ENCODE measurements at regions of chr14 and their contacts with region 1.

Region 1: DNA sequence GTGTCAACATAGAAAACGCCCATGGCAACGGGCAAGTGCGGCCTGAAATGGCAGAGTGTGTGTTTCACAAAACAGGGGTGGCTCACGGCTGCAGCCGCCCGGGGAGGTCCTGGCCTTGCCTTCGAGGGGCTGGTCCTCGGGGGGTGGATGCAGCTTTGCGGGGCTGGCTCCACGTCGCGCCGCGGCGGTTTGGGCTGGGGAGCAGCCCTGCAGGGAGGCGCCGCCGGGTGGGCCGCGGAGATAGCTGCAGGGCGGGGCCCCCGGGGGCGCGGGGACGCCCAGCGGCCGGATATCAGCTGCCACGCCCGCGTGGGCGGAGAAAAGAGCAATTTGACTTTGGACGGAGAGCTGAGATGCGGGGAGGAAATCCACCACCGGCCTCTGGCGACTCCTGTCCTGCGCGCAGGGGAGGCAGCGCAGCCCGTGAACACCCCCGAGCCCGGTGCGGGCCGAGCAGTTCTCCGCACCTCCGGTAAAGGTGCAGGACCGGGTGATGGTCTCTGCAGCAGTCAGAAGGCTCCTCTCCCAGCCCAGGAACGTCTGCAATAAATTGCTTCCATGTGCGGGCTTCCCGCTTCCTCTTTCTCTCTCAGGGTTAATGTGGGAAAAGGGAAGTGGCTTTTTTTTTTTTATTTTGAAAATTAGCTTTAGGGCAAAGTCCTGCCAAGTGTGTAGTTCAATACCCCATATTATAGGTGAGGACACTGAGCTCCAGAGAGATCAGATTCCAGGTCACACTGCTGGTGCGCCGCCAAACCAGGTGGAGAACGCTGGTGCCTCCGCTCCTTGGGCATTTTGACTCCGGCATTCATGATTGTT is 110.5 kb downstream of the ARF6 start:
- DNase-seq: peak; percentile 73 to 92 (median 79)
- H3K4me3 ChIP-seq: peak overlapping the region; percentile 82
- H3K4me3 Mint-ChIP-seq: peak overlapping the region; percentile 79 to 92 (median 81)
- H3K27ac ChIP-seq: peak overlapping the region; percentile 100
- H3K27ac Mint-ChIP-seq: peak overlapping the region; percentile 95 to 100 (median 99)
- H3K4me1 ChIP-seq: peaks cover 52% of the 10 kb centered on the region
- H3K4me1 Mint-ChIP-seq: peaks cover 51 to 74% (median 63%) of the 10 kb centered on the region in 3 donors
- H3K27me3 ChIP-seq: no peaks in the 10 kb centered on the region
- H3K27me3 Mint-ChIP-seq: peaks cover 0 to 1% of the 10 kb centered on the region in 2 donors

Region 2: DNA sequence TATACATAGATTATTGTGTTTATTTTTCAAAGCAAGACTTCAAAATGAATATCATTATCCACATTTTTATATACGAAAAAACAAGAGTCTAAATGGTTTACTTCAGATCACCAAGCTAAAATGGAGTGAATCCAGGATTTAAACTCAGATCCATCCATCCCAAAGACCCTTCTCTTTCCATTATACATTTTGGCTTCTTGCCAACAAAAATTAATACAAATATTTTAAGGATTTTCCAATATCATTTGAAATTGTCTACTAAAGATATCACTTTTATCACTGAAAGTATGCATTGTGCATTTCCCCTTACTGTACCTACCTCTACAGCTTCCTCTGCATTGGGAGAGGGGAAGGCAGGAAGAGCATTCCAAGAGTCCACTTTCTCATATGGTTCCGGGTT is 958.4 kb before region 1 on chr14:
- CTCF ChIA-PET with region 1: no interaction called
- POLR2A ChIA-PET with region 1: no interaction called
- DNase-seq: no peak
- H3K4me3 ChIP-seq: no peak overlapping the region
- H3K4me3 Mint-ChIP-seq: no peak overlapping the region
- H3K27ac ChIP-seq: no peak overlapping the region
- H3K27ac Mint-ChIP-seq: no peak overlapping the region
- H3K4me1 ChIP-seq: no peaks in the 10 kb centered on the region
- H3K4me1 Mint-ChIP-seq: no peaks in the 10 kb centered on the region
- H3K27me3 ChIP-seq: no peaks in the 10 kb centered on the region
- H3K27me3 Mint-ChIP-seq: no peaks in the 10 kb centered on the region

Region 3: DNA sequence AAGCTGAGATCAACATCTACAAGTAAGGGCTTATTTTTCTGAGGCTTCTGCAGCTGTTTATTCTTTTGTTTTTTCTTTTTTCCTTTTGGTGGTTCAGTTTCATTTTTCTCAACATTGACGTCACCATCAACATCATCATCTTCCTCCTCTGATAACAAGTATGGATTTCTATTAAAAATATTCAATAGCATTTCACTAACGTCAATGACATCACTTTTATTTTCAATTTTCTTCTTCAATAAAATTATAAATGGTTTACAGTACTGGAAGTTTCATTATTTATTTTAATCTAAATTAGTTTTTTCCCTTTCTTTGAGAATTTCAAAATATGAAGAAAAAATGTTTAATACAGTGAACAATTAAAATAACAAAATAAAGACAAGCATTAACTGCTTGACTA is 174.8 kb before region 1 on chr14:
- CTCF ChIA-PET with region 1: no interaction called
- POLR2A ChIA-PET with region 1: no interaction called
- DNase-seq: no peak
- H3K4me3 ChIP-seq: no peak overlapping the region
- H3K4me3 Mint-ChIP-seq: no peak overlapping the region
- H3K27ac ChIP-seq: no peak overlapping the region
- H3K27ac Mint-ChIP-seq: no peak overlapping the region
- H3K4me1 ChIP-seq: no peaks in the 10 kb centered on the region
- H3K4me1 Mint-ChIP-seq: peaks cover 6 to 8% (median 7%) of the 10 kb centered on the region in 3 donors
- H3K27me3 ChIP-seq: no peaks in the 10 kb centered on the region
- H3K27me3 Mint-ChIP-seq: no peaks in the 10 kb centered on the region

Region 4: DNA sequence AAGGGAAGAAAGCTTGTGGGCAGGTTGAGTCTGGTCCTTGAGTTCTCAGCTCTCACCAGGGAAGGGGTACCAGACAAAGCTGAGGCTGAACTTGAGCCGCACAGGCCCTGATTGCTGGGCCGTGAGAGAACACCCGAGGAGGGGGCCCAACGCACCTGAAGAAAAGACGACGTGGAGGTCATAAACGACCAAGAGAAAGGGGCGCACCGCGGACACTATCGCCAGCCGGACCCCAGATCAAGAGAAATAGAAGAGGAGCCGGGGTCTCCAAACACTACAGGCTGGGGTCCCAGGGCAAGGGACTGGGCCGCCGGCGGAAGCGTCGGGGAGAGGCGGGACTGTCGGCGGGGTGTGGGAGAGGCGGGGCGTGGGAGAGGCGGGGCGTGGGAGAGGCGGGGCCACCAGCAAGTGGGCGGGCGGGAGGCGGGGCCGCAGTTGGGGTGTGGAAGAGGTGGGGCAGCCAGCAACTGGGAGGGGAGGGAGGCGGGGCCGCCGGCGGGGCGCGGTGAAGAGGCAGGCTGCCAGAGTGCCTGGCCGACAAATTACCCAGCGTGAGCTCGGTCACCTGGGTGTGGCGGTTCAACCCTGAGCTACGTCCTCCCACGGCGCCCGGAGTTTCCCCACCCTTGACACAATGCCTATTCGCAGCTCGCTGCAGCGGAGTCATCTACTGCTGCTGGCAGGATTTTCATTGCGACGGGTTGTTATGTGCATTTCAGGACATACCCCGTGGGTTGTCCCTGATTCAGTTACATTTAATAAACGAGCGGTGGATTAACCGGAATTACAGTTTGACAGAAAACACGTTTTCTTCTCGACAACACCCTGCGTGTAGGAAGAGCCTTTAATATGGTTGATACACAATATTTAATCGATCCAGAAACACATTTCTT is 135.3 kb before region 1 on chr14:
- CTCF ChIA-PET with region 1: interaction called, 163 read pairs
- POLR2A ChIA-PET with region 1: interaction called, 71 read pairs
- DNase-seq: peak; percentile 93 to 99 (median 97)
- H3K4me3 ChIP-seq: peak overlapping the region; percentile 76
- H3K4me3 Mint-ChIP-seq: peak overlapping the region; percentile 77 to 93 (median 89)
- H3K27ac ChIP-seq: peak overlapping the region; percentile 75
- H3K27ac Mint-ChIP-seq: peak overlapping the region; percentile 92 to 99 (median 98)
- H3K4me1 ChIP-seq: peaks cover 40% of the 10 kb centered on the region
- H3K4me1 Mint-ChIP-seq: peaks cover 17 to 30% (median 17%) of the 10 kb centered on the region in 3 donors
- H3K27me3 ChIP-seq: no peaks in the 10 kb centered on the region
- H3K27me3 Mint-ChIP-seq: no peaks in the 10 kb centered on the region

Region 5: GRCh38 chr14:49940808-49941421 is 62.5 kb before region 1 on chr14:
- CTCF ChIA-PET with region 1: interaction called, 9 read pairs
- POLR2A ChIA-PET with region 1: interaction called, 13 read pairs
- DNase-seq: peak in 3 of 5 donors; percentile 31 to 61 (median 35)
- H3K4me3 ChIP-seq: no peak overlapping the region
- H3K4me3 Mint-ChIP-seq: peak overlapping the region in 6 of 7 donors; percentile 54 to 77 (median 64)
- H3K27ac ChIP-seq: no peak overlapping the region
- H3K27ac Mint-ChIP-seq: peak overlapping the region; percentile 5 to 95 (median 78)
- H3K4me1 ChIP-seq: peaks cover 44% of the 10 kb centered on the region
- H3K4me1 Mint-ChIP-seq: peaks cover 55 to 76% (median 65%) of the 10 kb centered on the region in 3 donors
- H3K27me3 ChIP-seq: no peaks in the 10 kb centered on the region
- H3K27me3 Mint-ChIP-seq: no peaks in the 10 kb centered on the region

Region 6: GRCh38 chr14:49954171-49954631 is 49.2 kb before region 1 on chr14:
- CTCF ChIA-PET with region 1: no interaction called
- POLR2A ChIA-PET with region 1: no interaction called
- DNase-seq: no peak
- H3K4me3 ChIP-seq: no peak overlapping the region
- H3K4me3 Mint-ChIP-seq: no peak overlapping the region
- H3K27ac ChIP-seq: no peak overlapping the region
- H3K27ac Mint-ChIP-seq: no peak overlapping the region
- H3K4me1 ChIP-seq: peaks cover 4% of the 10 kb centered on the region
- H3K4me1 Mint-ChIP-seq: peaks cover 11 to 26% (median 23%) of the 10 kb centered on the region in 3 donors
- H3K27me3 ChIP-seq: no peaks in the 10 kb centered on the region
- H3K27me3 Mint-ChIP-seq: no peaks in the 10 kb centered on the region

Region 7: DNA sequence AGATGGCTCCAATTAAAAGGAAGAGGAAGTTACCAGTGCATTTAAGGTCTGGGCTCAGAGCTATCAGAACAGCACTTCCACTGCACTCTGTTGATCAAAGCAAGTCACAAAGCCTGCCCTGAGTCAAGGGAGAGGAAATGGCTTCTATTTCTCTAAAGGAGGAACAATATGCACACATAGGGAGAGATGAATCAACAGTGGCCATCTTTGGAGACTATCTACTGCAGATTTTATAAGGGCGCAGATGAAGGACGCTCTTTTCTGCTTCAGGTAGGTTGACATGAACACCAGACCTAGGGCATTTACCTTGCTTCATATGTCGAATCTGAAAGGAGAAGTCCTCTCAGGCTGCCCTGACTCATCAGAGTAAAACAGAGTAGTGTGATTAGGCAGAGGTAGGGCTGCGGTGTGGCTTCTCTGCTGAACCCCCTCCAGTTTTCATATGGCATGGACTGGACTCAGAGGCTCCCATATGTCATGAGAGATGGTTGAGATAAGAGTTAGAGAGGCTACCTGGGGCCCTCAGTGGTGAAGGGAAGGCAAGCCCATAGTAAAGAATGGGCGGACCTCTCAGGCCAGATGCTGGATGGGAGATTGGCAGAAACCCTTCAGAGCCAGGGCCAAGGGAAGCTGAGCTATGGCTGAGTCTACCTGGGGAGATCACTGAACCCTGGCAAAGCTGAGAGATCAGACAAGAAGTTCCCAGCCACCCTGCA is 26.1 kb before region 1 on chr14:
- CTCF ChIA-PET with region 1: interaction called, 40 read pairs
- POLR2A ChIA-PET with region 1: interaction called, 50 read pairs
- DNase-seq: peak in 2 of 5 donors; percentile 27 to 55
- H3K4me3 ChIP-seq: peak overlapping the region; percentile 52
- H3K4me3 Mint-ChIP-seq: peak overlapping the region; percentile 15 to 72 (median 38)
- H3K27ac ChIP-seq: no peak overlapping the region
- H3K27ac Mint-ChIP-seq: peak overlapping the region; percentile 68 to 95 (median 89)
- H3K4me1 ChIP-seq: peaks cover 79% of the 10 kb centered on the region
- H3K4me1 Mint-ChIP-seq: peaks cover 67 to 97% (median 83%) of the 10 kb centered on the region in 3 donors
- H3K27me3 ChIP-seq: no peaks in the 10 kb centered on the region
- H3K27me3 Mint-ChIP-seq: peaks cover 0 to 1% of the 10 kb centered on the region in 2 donors

Region 8: GRCh38 chr14:50060871-50061663 is 57.6 kb after region 1 on chr14:
- CTCF ChIA-PET with region 1: interaction called, 82 read pairs
- POLR2A ChIA-PET with region 1: interaction called, 85 read pairs
- DNase-seq: peak in 4 of 5 donors; percentile 32 to 57 (median 43)
- H3K4me3 ChIP-seq: peak overlapping the region; percentile 61
- H3K4me3 Mint-ChIP-seq: peak overlapping the region; percentile 77 to 96 (median 90)
- H3K27ac ChIP-seq: peak overlapping the region; percentile 93
- H3K27ac Mint-ChIP-seq: peak overlapping the region; percentile 89 to 100 (median 99)
- H3K4me1 ChIP-seq: peaks cover 73% of the 10 kb centered on the region
- H3K4me1 Mint-ChIP-seq: peaks cover 71 to 94% (median 88%) of the 10 kb centered on the region in 3 donors
- H3K27me3 ChIP-seq: no peaks in the 10 kb centered on the region
- H3K27me3 Mint-ChIP-seq: no peaks in the 10 kb centered on the region

Region 9: GRCh38 chr14:50123062-50123461 is 119.6 kb after region 1 on chr14:
- CTCF ChIA-PET with region 1: no interaction called
- POLR2A ChIA-PET with region 1: no interaction called
- DNase-seq: no peak
- H3K4me3 ChIP-seq: no peak overlapping the region
- H3K4me3 Mint-ChIP-seq: no peak overlapping the region
- H3K27ac ChIP-seq: no peak overlapping the region
- H3K27ac Mint-ChIP-seq: peak overlapping the region in 2 of 8 donors; percentile 1 to 16
- H3K4me1 ChIP-seq: no peaks in the 10 kb centered on the region
- H3K4me1 Mint-ChIP-seq: no peaks in the 10 kb centered on the region
- H3K27me3 ChIP-seq: no peaks in the 10 kb centered on the region
- H3K27me3 Mint-ChIP-seq: no peaks in the 10 kb centered on the region